CD8-positive, alpha-beta T cell (primary cell): ENCODE measurements at regions of chrX and their contacts with region 1.

Region 1: DNA sequence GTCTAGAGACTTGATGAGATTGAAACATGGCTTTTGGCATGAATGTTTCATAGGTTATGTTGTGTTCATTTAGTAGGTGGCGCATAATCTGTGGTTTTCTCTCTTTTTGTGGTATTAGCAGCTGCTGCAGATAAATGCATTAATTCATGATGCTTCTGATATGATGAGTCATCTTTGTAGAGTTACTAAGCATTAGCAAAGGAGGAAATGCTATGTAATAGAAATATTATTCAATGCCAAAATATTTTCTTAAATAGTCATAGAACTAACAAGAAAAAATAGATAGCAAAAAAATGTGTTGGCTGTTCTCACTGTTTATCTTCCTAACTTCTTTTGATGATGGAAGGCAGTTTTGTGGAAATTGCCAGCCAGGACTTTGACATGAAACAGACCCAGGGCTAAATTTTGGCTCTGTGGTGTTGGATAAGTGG is 3.6 kb downstream of the ZXDB start:
- DNase-seq: peak in 2 of 9 experiments; percentile 27 to 47
- ATAC-seq: no peak
- H3K4me3 ChIP-seq: no peak overlapping the region
- H3K4me3 Mint-ChIP-seq: peak overlapping the region; percentile 73
- H3K27ac ChIP-seq: no peak overlapping the region
- H3K27ac Mint-ChIP-seq: peak overlapping the region; percentile 49
- H3K4me1 ChIP-seq: peaks cover 20% of the 10 kb centered on the region
- H3K4me1 Mint-ChIP-seq: peaks cover 42% of the 10 kb centered on the region
- H3K27me3 ChIP-seq: no peaks in the 10 kb centered on the region
- H3K27me3 Mint-ChIP-seq: no peaks in the 10 kb centered on the region
- CTCF ChIP-seq: no peak

Region 2: DNA sequence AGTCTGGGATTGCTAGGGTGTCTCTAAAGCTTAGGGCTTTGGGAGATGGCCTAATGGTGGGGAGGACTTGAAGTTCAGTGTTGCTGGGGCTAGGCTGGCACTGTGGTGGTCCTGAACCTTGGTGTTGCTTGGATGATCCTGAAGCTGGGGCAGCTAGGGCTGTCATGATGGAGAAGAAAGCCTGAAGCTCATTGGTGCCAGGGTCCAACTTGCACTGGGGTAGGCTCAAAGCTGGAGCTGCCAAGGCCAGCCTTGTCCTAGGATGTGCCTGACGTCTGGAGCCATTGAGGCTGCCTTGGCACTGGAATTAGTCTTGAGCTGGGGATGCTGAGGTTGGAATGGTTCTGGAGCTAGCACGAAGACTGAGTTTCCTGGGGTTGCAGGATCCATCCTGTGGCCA is 145.7 kb after region 1 on chrX:
- CTCF ChIA-PET with region 1: no interaction called
- POLR2A ChIA-PET with region 1: no interaction called
- intact Hi-C with region 1: no loop called
- DNase-seq: no peak
- ATAC-seq: no peak
- H3K4me3 ChIP-seq: no peak overlapping the region
- H3K4me3 Mint-ChIP-seq: no peak overlapping the region
- H3K27ac ChIP-seq: no peak overlapping the region
- H3K27ac Mint-ChIP-seq: no peak overlapping the region
- H3K4me1 ChIP-seq: no peaks in the 10 kb centered on the region
- H3K4me1 Mint-ChIP-seq: no peaks in the 10 kb centered on the region
- H3K27me3 ChIP-seq: no peaks in the 10 kb centered on the region
- H3K27me3 Mint-ChIP-seq: peaks cover 5% of the 10 kb centered on the region
- CTCF ChIP-seq: no peak

Region 3: DNA sequence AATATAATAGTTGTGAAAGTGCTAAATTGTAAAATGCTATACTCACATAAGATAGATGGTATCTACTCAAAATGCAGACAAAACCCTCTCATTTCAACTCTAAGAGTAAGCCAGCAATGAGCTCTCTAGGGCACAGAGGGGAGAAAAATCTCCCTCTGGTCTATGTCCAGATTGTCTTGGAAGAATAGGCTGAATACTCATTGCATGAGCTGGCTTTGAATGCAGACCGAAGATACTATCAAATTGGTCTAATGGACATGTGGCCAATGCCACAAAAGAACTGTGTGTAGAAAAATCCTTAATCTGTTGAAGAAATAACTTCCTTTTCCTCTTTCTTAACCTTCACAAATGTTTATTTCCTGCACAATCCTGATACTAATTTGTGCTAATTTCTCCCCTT is 311.4 kb after region 1 on chrX:
- CTCF ChIA-PET with region 1: no interaction called
- POLR2A ChIA-PET with region 1: no interaction called
- intact Hi-C with region 1: loop called in 1 of 2 experiments (anchors 2 kb)
- DNase-seq: no peak
- ATAC-seq: no peak
- H3K4me3 ChIP-seq: no peak overlapping the region
- H3K4me3 Mint-ChIP-seq: peak overlapping the region; percentile 45
- H3K27ac ChIP-seq: no peak overlapping the region
- H3K27ac Mint-ChIP-seq: no peak overlapping the region
- H3K4me1 ChIP-seq: peaks cover 9% of the 10 kb centered on the region
- H3K4me1 Mint-ChIP-seq: peaks cover 45% of the 10 kb centered on the region
- H3K27me3 ChIP-seq: no peaks in the 10 kb centered on the region
- H3K27me3 Mint-ChIP-seq: no peaks in the 10 kb centered on the region
- CTCF ChIP-seq: no peak